GM13976 (cell line): ENCODE measurements at regions of chr4 and their contacts with region 1.

Region 1: GRCh38 chr4:128191115-128191781 is 96.4 kb downstream of the PGRMC2 start:
- DNase-seq: peak; percentile 62
- CTCF ChIP-seq: peak; percentile 70

Region 2: GRCh38 chr4:128454281-128455075 is 263.2 kb after region 1 on chr4:
- in situ Hi-C with region 1: loop called (anchors 25 kb)
- DNase-seq: peak; percentile 74
- CTCF ChIP-seq: peak; percentile 81

Region 3: GRCh38 chr4:128751334-128751733 is 560.1 kb after region 1 on chr4:
- in situ Hi-C with region 1: no loop called
- DNase-seq: no peak
- CTCF ChIP-seq: no peak

Region 4: DNA sequence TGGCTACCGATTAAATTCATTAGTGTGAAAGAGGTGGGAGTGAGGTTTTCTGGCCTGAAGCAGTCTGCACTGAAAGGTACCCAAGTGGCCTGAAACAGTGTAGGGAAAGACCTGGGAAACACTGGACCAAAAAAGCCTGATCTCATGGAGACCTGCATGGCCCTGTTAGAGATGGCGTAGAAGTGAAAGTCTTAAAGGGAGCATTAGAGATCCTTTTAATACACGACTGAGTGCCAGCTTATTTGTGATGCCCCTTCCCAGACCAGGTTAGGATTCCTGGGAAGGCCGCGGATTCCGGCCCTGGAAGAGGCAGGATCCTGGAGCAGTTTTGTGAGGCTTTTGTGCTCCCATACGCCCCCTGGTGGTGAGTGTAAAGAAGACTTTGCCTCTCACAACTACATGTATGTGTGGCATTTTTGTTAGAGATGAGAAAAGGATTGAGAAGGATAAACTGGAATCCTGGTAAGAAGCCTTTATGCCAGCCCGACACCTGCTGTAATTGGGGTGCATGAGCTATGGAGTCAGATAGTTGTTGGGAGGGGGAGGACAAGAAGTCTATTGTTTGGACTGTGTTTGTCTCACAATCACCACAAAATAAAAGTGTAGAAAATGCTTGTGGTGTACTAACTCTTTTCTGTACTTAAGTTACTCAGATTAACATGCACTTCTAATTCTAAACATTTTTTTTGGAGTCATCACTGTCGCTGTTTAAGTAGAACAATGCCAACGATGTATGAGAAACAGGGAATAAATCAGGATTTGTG is 672.2 kb after region 1 on chr4:
- in situ Hi-C with region 1: loop called (anchors 25 kb)
- DNase-seq: peak; percentile 41
- CTCF ChIP-seq: peak; percentile 73

Region 5: GRCh38 chr4:128916832-128917231 is 725.6 kb after region 1 on chr4:
- in situ Hi-C with region 1: no loop called
- DNase-seq: peak; percentile 21
- CTCF ChIP-seq: no peak